ENCODE measurements at regions of chr7 and their contacts with region 1.

Region 1: GRCh38 chr7:117021986-117022385 is 68.7 kb downstream of the ST7 start:
- DNase-seq: no peak
- H3K27ac ChIP-seq: no peak overlapping the region
- CTCF ChIP-seq: no peak

Region 2: DNA sequence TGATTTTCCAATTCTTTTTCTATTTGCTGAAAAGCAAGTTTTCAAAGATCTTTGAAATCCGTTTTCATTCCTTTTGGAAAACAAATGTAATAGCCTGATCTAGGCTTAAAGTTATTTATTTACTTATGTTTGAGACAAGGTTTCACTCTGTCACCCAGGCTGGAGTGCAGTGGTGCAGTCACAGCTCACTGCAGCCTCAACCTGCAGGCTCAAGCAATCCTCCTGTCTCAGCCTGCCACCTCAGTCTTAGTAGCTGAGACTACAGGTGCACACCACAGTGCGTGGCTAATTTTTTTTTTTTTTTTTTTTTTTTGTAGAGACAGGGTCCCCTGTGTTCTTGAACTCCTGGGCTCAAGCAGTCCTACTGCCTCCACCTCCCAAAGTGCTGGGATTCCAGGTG is 64.1 kb before region 1 on chr7:
- CTCF ChIA-PET with region 1: no interaction called
- POLR2A ChIA-PET with region 1: interaction called, 11 read pairs
- DNase-seq: no peak
- H3K27ac ChIP-seq: no peak overlapping the region
- CTCF ChIP-seq: no peak

Region 3: DNA sequence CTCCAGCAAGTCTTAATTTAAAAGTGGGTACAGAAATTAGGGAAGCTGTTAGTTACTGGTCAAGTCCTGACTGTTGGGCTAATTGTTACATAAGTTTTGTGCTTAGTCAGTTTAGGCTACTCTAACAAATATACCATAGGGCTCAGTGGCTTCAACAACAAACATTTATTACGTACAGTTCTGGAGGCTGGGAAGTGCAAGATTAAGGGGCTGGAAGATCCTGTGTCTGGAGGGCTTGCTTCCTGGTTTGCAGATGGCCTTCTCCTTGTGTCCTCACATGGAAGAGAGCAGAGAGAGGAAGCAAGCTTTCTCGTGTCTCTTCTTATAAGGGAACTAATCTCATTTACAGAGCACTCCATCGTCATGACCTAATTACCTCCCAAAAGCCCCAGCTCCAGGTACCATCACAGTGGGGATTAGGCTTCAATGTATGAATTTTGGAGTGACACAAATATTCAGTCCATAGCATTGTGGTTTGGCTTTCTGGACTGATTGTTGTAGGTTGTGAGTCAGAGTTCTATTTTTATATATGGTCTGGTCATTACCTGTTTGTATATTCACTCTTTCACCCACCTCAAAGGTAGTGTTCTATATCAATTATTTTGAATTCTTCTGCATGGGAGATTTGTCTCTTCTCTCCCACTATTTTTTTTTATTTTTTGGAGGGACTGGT is 51.6 kb before region 1 on chr7:
- CTCF ChIA-PET with region 1: no interaction called
- POLR2A ChIA-PET with region 1: no interaction called
- DNase-seq: no peak
- H3K27ac ChIP-seq: no peak overlapping the region
- CTCF ChIP-seq: no peak

Region 4: GRCh38 chr7:117230276-117231046 is 208.5 kb after region 1 on chr7:
- CTCF ChIA-PET with region 1: no interaction called
- POLR2A ChIA-PET with region 1: no interaction called
- DNase-seq: no peak
- H3K27ac ChIP-seq: no peak overlapping the region
- CTCF ChIP-seq: no peak

Region 5: GRCh38 chr7:117961235-117961634 is 939.2 kb after region 1 on chr7:
- CTCF ChIA-PET with region 1: no interaction called
- POLR2A ChIA-PET with region 1: no interaction called
- DNase-seq: no peak
- H3K27ac ChIP-seq: no peak overlapping the region
- CTCF ChIP-seq: no peak

Measured in RWPE1 (cell line).